Psoas muscle (tissue), 8 donors: ENCODE measurements at regions of chr11 and their contacts with region 1.

Region 1: DNA sequence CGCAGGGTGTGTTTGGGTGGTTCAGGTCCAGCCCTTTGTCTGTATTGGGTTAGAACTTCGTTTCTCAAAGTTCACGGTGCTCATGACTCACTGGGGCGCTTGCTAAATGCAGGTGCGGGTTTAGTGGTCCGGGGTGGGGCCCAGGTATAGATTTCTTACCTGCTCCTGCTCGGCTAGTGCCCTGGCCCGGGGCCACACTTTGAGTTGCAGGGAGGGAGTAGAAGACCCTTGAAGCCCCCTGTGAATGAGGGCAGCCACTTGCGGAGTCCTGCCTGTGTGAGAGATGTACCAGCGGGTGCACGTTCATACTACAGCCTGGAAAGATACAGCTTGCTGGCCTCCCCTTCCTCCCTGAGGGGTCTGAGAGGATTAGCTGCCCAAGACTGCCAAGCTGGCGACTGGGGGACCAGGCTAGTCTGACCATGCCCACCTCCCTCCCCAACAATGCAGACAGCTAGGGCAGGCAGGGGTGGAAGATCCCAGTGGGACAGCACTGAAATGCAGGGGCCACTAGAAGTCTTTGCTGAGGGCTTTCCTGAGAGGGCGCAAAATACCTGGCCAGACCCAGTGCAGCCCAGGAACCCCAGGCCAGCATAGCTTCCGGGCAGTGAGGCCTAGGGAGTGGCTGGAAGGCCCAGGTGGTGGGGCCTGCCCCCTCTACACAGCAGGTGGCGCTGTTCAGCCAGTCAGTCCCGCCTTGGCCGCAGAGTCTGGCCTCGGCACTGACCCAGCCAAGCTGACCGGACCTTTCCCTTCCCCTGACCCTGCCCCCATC is 5.1 kb upstream of the MYRF start:
- DNase-seq: peak; percentile 84 to 89
- ATAC-seq: peak; percentile 89 to 95 (median 90)
- H3K4me3 ChIP-seq: no peak overlapping the region
- H3K27ac ChIP-seq: no peak overlapping the region
- H3K4me1 ChIP-seq: peaks cover 6% of the 10 kb centered on the region
- H3K27me3 ChIP-seq: peaks cover 0 to 5% (median 0%) of the 10 kb centered on the region in 3 donors
- CTCF ChIP-seq: peak; percentile 82

Region 2: DNA sequence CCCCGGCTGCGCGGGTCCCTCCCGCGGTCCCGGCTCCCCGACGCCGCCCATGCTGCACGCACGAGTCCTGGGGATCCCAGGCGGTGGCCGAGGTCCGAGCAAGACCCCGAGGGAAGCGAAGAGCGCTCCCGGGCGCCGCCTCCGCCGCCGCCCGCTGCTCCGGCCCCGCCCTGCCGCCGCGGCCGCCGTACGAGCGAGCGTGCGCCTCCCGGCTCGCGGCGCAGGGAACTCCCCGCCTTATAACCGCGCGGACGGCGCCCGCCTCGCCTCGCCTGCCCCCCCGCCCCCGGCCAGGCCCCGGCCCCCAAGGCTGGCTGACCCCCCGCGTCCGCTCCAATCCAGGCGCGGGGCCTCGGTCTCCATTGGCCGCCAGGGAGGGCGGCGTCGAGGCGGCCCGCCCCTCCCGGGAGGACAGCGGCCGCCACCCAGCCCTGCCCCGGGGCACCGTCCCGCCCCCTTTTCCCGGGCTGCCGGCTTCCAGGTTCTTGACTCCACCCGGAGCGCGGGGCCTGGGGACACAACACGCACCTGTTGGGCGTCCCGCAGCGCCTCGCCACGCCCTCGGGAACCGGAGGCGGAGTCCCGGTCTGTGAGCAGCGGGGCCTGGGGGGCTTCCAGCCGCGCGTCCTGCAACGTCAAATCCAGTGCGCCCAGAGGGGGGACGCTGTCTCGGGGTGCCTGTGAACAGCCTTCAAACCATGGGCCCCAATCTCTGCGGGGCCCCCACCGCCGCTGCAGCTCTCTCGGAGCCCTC is 144.1 kb after region 1 on chr11 and contains the start of gene FADS3:
- intact Hi-C with region 1: no loop called
- DNase-seq: peak; percentile 92 to 94
- ATAC-seq: peak; percentile 77 to 88 (median 80)
- H3K4me3 ChIP-seq: peak within 1 kb of the TSS; percentile 91
- H3K27ac ChIP-seq: peak within 1 kb of the TSS; percentile 87
- H3K4me1 ChIP-seq: peaks cover 23% of the 10 kb centered on the region
- H3K27me3 ChIP-seq: no peaks in the 10 kb centered on the region
- CTCF ChIP-seq: no peak
- total RNA-seq, gene FADS3: 49.3 to 247 (median 57.9) TPM

Region 3: DNA sequence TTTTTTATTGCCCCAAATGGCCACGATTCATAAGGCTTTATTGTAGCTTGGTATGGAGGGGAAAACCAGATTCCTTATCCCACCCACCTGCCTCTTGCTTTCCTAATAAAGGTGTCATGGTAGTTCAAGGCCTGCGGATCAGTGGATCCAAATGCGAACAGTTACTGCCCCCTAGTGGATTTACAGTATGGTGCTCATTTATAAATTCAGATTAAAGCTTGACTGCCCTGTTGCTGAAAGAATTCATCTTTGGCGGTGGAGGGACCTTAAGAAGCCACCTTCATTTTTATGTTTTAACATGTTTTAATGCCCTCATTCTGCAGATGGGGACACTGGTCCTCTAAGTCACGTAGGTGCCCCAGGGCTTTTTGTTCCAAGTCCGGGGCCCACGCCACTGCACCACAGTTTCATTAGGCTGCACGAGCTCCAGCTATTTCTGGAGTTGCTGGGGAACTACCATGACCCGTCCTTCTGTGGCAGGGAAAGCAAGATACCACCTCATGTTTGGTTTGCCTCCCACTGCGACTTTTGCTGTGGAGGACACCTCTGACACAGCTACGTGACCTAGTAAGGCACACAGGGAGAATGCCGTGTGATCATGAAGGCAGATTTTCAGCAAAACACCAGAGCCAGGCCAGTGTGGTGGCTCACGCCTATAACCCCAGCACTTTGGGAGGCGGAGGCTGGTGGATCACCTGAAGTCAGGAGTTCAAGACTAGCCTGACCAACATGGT is 360.8 kb after region 1 on chr11:
- intact Hi-C with region 1: loop called in 1 of 2 experiments (anchors 2 kb)
- DNase-seq: no peak
- ATAC-seq: peak; percentile 46 to 66 (median 56)
- H3K4me3 ChIP-seq: no peak overlapping the region
- H3K27ac ChIP-seq: no peak overlapping the region
- H3K4me1 ChIP-seq: peaks cover 27% of the 10 kb centered on the region
- H3K27me3 ChIP-seq: no peaks in the 10 kb centered on the region
- CTCF ChIP-seq: peak; percentile 82